CD8-positive, alpha-beta T cell (primary cell): ENCODE measurements at regions of chr17 and their contacts with region 1.

Region 1: GRCh38 chr17:41322094-41322902 is 6.8 kb upstream of the KRTAP17-1 start:
- DNase-seq: peak in 4 of 9 experiments; percentile 29 to 75 (median 56)
- ATAC-seq: peak; percentile 86
- H3K4me3 ChIP-seq: no peak overlapping the region
- H3K4me3 Mint-ChIP-seq: no peak overlapping the region
- H3K27ac ChIP-seq: no peak overlapping the region
- H3K27ac Mint-ChIP-seq: peak overlapping the region; percentile 62
- H3K4me1 ChIP-seq: peaks cover 51% of the 10 kb centered on the region
- H3K4me1 Mint-ChIP-seq: peaks cover 47% of the 10 kb centered on the region
- H3K27me3 ChIP-seq: no peaks in the 10 kb centered on the region
- H3K27me3 Mint-ChIP-seq: no peaks in the 10 kb centered on the region
- CTCF ChIP-seq: peak; percentile 86

Region 2: GRCh38 chr17:40909351-40909750 is 412.9 kb before region 1 on chr17:
- CTCF ChIA-PET with region 1: interaction called, 30 read pairs
- POLR2A ChIA-PET with region 1: no interaction called
- intact Hi-C with region 1: loop called (anchors 1 to 2 kb)
- DNase-seq: peak; percentile 33 to 81 (median 66)
- ATAC-seq: peak; percentile 88
- H3K4me3 ChIP-seq: no peak overlapping the region
- H3K4me3 Mint-ChIP-seq: no peak overlapping the region
- H3K27ac ChIP-seq: no peak overlapping the region
- H3K27ac Mint-ChIP-seq: no peak overlapping the region
- H3K4me1 ChIP-seq: no peaks in the 10 kb centered on the region
- H3K4me1 Mint-ChIP-seq: no peaks in the 10 kb centered on the region
- H3K27me3 ChIP-seq: peaks cover 0 to 5% of the 10 kb centered on the region in 2 experiments
- H3K27me3 Mint-ChIP-seq: peaks cover 35% of the 10 kb centered on the region
- CTCF ChIP-seq: peak; percentile 82

Region 3: DNA sequence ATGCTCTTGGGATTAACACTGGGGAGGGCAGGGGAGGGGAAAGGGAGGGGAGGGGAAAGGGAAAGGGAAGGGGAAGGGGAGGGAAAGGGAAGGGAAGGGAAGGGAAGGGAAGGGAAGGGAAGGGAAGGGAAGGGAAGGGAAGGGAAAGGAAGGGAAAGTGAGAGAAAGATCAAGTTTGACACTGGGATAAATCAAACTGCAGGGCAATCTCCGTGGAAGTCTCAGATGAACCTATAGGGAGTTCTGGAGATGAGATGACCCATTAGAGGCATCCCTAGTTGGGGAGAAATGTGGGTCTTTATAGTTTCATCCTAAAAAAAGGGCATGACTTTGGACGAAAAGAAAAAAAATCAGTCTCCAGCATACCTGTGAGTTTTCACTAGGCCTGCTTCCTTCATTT is 200.6 kb before region 1 on chr17:
- CTCF ChIA-PET with region 1: interaction called, 11 read pairs
- POLR2A ChIA-PET with region 1: no interaction called
- intact Hi-C with region 1: loop called (anchors 1 to 2 kb)
- DNase-seq: no peak
- ATAC-seq: no peak
- H3K4me3 ChIP-seq: no peak overlapping the region
- H3K4me3 Mint-ChIP-seq: no peak overlapping the region
- H3K27ac ChIP-seq: no peak overlapping the region
- H3K27ac Mint-ChIP-seq: no peak overlapping the region
- H3K4me1 ChIP-seq: peaks cover 53% of the 10 kb centered on the region
- H3K4me1 Mint-ChIP-seq: peaks cover 65% of the 10 kb centered on the region
- H3K27me3 ChIP-seq: no peaks in the 10 kb centered on the region
- H3K27me3 Mint-ChIP-seq: peaks cover 6% of the 10 kb centered on the region
- CTCF ChIP-seq: no peak

Region 4: DNA sequence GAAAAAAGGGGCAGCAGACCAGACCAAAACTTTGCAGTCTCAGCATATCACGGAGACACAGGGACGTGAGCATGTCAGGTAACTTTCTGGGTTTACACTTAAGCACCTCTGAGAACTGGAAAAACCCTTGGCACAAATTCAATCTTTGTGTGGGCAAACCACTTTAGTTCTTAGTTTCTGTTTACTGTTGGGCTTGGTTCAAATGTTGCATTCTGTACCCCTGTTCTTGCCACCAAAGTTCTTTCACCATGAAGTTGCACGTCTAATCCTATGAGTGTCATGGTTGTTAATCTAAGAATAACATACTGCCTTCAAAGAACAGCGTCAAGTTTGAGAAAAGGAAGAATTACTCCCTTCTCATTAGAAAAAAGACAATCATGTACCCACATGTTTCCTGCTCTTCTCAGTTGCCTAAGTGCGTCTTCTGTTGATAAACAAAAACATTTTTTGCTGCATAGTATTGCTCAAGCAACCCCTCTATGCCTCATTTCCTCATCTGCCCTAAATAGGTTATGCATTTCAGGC is 16.7 kb after region 1 on chr17:
- CTCF ChIA-PET with region 1: interaction called, 41 read pairs
- POLR2A ChIA-PET with region 1: interaction called, 4 read pairs
- intact Hi-C with region 1: no loop called
- DNase-seq: peak in 5 of 9 experiments; percentile 38 to 94 (median 68)
- ATAC-seq: peak; percentile 82
- H3K4me3 ChIP-seq: peak overlapping the region in 1 of 2 experiments; percentile 2
- H3K4me3 Mint-ChIP-seq: peak overlapping the region; percentile 63
- H3K27ac ChIP-seq: peak overlapping the region; percentile 58 to 63
- H3K27ac Mint-ChIP-seq: peak overlapping the region; percentile 98
- H3K4me1 ChIP-seq: peaks cover 85% of the 10 kb centered on the region
- H3K4me1 Mint-ChIP-seq: peaks cover 90% of the 10 kb centered on the region
- H3K27me3 ChIP-seq: no peaks in the 10 kb centered on the region
- H3K27me3 Mint-ChIP-seq: no peaks in the 10 kb centered on the region
- CTCF ChIP-seq: no peak

Region 5: DNA sequence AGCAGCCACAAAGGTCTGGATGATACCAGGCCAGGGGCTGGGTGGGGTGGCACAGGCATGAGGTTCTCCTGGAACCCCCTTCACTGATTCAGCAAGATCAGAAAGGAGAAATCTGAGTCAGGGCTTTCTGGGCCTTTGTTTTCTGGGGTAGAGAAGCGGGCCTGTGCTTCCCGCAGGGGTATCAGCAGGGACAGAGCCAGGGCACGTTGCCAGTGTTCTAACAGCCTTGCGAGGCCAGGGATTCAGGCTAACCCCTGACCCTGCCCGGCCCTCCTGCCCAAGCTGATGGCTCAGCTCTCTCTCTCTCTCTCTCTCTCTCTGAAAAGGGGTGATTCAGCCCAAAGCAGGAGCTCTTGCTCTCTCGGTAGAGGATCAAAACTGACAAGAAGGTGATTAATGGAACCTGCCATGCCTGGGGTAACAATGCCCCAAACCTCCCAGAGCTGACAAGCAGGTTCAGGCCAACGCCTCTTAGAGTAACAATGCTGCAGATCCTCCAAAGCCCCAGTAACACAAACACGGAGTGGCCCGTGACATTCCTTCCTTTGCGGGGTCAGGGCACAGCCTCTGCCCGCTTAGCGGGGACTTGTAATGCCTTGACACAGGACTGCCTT is 185.1 kb after region 1 on chr17:
- CTCF ChIA-PET with region 1: no interaction called
- POLR2A ChIA-PET with region 1: no interaction called
- intact Hi-C with region 1: no loop called
- DNase-seq: no peak
- ATAC-seq: no peak
- H3K4me3 ChIP-seq: no peak overlapping the region
- H3K4me3 Mint-ChIP-seq: no peak overlapping the region
- H3K27ac ChIP-seq: no peak overlapping the region
- H3K27ac Mint-ChIP-seq: no peak overlapping the region
- H3K4me1 ChIP-seq: no peaks in the 10 kb centered on the region
- H3K4me1 Mint-ChIP-seq: no peaks in the 10 kb centered on the region
- H3K27me3 ChIP-seq: no peaks in the 10 kb centered on the region
- H3K27me3 Mint-ChIP-seq: peaks cover 2% of the 10 kb centered on the region
- CTCF ChIP-seq: no peak